ENCODE measurements at regions of chr16 and their contacts with region 1.

Region 1: GRCh38 chr16:56708525-56709442 is 21.1 kb upstream of the NUP93 start:
- DNase-seq: no peak
- CTCF ChIP-seq: no peak

Region 2: GRCh38 chr16:56382901-56383355 is 325.9 kb before region 1 on chr16:
- in situ Hi-C with region 1: no loop called
- DNase-seq: no peak
- CTCF ChIP-seq: no peak

Region 3: DNA sequence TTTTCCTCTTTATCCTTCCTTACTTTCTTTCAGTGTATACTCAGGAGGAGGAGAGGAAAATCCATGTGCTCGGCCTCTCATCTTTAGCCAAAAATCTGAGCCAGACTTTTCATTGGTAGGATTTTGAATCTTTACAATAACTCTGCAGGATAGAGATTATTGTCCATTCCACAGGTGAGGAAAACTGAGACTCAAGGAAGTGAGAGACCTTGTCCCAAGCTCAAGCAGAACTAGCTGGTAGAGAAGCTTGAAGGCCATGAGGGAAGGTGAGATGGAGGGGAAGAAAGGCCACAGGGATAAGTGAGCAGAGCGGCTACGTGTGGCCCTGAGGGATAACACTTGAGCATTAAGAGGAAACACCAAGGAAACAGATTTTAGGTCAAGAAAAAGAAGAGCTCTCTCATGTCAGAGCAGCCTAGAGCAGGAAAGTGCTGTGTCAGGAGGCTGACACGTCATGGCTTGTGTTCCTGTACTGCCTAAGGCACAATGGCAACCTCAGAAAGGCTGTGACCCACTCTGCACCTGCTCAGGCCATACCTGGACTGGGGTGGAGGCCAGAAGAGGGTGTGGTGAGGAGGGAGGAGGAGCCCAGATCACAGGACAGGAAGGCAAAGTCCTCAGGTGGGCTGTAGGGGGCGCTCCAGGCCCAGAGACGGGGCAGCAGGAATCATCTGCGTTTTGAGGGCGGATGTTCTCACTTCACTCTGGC is 132.0 kb before region 1 on chr16:
- in situ Hi-C with region 1: loop called (anchors 10 kb)
- DNase-seq: peak; percentile 84
- CTCF ChIP-seq: peak; percentile 91

Measured in GM13977 (cell line).